ENCODE measurements at regions of chr4 and their contacts with region 1.

Region 1: DNA sequence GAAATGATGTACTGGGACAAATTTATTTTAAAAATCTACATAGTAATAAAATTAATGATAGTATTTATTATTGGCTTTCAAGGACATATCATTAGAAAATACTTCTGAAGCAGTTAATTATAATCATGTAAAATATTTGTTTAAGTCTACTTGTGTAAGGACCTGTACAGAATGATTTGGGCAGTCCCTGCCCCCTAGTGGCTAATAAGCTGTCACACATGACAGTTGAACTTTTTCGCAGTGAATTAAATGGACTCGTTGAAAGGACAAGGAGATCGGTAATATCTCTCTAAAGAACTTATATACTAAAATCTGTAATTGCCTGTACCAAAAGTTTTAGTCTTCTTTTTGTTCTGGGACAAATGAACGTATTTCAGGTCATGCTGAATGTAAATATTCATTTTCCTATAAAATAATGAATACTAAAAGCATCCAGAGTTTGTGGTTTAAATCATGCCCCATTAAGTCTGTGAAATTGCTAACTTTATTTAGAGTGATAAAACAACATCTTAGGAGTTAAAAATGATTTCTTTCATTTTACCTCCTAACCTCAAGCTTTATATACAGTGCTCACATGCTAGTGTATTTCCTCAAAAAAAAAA is 13.6 kb downstream of the EXOC1 start:
- DNase-seq: peak; percentile 78
- H3K4me3 ChIP-seq: no peak overlapping the region
- H3K27ac ChIP-seq: peak overlapping the region; percentile 55
- H3K4me1 ChIP-seq: peaks cover 21% of the 10 kb centered on the region
- H3K27me3 ChIP-seq: no peaks in the 10 kb centered on the region
- CTCF ChIP-seq: peak; percentile 65 to 68
- POLR2A ChIP-seq: no peak

Region 2: DNA sequence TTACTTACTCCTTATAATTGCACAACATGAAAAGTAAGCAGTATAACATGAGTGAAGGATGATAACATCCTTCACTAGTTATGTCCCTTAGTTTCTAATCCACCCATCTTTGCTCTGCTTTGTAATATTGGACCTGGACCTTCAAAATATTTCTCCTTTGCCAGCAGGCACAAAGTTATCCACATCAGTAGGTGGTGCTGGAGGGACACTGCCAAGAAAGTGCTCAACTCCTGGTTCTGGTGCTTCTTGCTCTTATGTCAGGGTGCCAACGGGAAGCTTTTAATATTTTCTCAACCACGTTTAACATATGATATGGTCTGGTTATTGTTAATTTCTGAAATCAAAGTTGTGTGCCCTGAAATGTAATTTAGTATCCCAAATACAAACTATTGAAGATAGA is 422.2 kb before region 1 on chr4:
- CTCF ChIA-PET with region 1: interaction called, 9 read pairs
- POLR2A ChIA-PET with region 1: no interaction called
- dilution Hi-C with region 1: no loop called
- intact Hi-C with region 1: loop called (anchors 2 kb)
- DNase-seq: peak; percentile 31
- H3K4me3 ChIP-seq: no peak overlapping the region
- H3K27ac ChIP-seq: no peak overlapping the region
- H3K4me1 ChIP-seq: peaks cover 3% of the 10 kb centered on the region
- H3K27me3 ChIP-seq: no peaks in the 10 kb centered on the region
- CTCF ChIP-seq: peak in 1 of 2 donors; percentile 20
- POLR2A ChIP-seq: no peak

Region 3: DNA sequence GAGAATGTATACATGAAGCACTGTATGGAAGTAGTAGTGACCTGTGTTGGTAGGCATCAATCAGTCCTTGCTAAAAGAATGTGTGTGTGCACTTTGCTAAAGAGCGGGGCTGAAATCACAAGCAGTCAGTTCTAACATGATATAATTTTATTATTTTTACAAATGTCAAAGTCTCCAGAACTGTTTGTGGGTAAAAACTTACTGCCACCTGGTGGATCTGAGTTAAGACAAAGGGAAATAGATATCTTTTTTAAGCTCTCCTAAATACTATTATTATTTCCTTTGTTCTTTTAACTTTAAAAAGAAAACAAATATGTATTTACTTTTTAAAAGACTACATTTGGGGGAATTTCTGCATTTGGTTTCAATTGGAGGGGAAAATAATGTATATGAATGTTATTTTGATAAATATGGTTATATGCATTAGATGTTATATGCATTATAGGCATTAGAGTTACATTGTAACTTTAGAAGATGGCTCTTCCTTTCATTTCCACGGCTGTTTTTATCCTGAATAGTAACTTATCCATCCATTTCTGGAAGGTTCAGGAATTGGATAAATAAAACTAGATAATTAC is 312.5 kb before region 1 on chr4:
- CTCF ChIA-PET with region 1: interaction called, 16 read pairs
- POLR2A ChIA-PET with region 1: no interaction called
- dilution Hi-C with region 1: no loop called
- intact Hi-C with region 1: no loop called
- DNase-seq: peak; percentile 55
- H3K4me3 ChIP-seq: no peak overlapping the region
- H3K27ac ChIP-seq: no peak overlapping the region
- H3K4me1 ChIP-seq: no peaks in the 10 kb centered on the region
- H3K27me3 ChIP-seq: peaks cover under 1 to 2% of the 10 kb centered on the region in 2 experiments
- CTCF ChIP-seq: peak; percentile 14 to 23
- POLR2A ChIP-seq: no peak

Region 4: GRCh38 chr4:55768291-55768690 is 98.8 kb before region 1 on chr4:
- CTCF ChIA-PET with region 1: no interaction called
- POLR2A ChIA-PET with region 1: no interaction called
- dilution Hi-C with region 1: no loop called
- intact Hi-C with region 1: loop called (anchors 5 kb)
- DNase-seq: peak; percentile 57
- H3K4me3 ChIP-seq: no peak overlapping the region
- H3K27ac ChIP-seq: no peak overlapping the region
- H3K4me1 ChIP-seq: peaks cover 9% of the 10 kb centered on the region
- H3K27me3 ChIP-seq: peaks cover 0 to 2% of the 10 kb centered on the region in 2 experiments
- CTCF ChIP-seq: no peak
- POLR2A ChIP-seq: no peak

Region 5: GRCh38 chr4:55853484-55854046 is 13.5 kb before region 1 on chr4 and contains the start of gene EXOC1:
- CTCF ChIA-PET with region 1: interaction called, 22 read pairs
- POLR2A ChIA-PET with region 1: interaction called, 6 read pairs
- dilution Hi-C with region 1: no loop called
- intact Hi-C with region 1: loop called (anchors 1 kb)
- DNase-seq: peak; percentile 97
- H3K4me3 ChIP-seq: peak within 1 kb of the TSS; percentile 59 to 79 (median 64)
- H3K27ac ChIP-seq: peak within 1 kb of the TSS; percentile 51
- H3K4me1 ChIP-seq: peaks cover 8% of the 10 kb centered on the region
- H3K27me3 ChIP-seq: peaks cover 16 to 22% of the 10 kb centered on the region in 2 experiments
- CTCF ChIP-seq: no peak
- POLR2A ChIP-seq: peak; percentile 83
- total RNA-seq, gene EXOC1: 30.5 and 33.3 TPM in 2 replicates

Region 6: GRCh38 chr4:55904576-55904975 is 37.5 kb after region 1 on chr4:
- CTCF ChIA-PET with region 1: interaction called, 11 read pairs
- POLR2A ChIA-PET with region 1: no interaction called
- dilution Hi-C with region 1: no loop called
- intact Hi-C with region 1: no loop called
- DNase-seq: no peak
- H3K4me3 ChIP-seq: no peak overlapping the region
- H3K27ac ChIP-seq: no peak overlapping the region
- H3K4me1 ChIP-seq: peaks cover 11% of the 10 kb centered on the region
- H3K27me3 ChIP-seq: no peaks in the 10 kb centered on the region
- CTCF ChIP-seq: no peak
- POLR2A ChIP-seq: no peak

Region 7: DNA sequence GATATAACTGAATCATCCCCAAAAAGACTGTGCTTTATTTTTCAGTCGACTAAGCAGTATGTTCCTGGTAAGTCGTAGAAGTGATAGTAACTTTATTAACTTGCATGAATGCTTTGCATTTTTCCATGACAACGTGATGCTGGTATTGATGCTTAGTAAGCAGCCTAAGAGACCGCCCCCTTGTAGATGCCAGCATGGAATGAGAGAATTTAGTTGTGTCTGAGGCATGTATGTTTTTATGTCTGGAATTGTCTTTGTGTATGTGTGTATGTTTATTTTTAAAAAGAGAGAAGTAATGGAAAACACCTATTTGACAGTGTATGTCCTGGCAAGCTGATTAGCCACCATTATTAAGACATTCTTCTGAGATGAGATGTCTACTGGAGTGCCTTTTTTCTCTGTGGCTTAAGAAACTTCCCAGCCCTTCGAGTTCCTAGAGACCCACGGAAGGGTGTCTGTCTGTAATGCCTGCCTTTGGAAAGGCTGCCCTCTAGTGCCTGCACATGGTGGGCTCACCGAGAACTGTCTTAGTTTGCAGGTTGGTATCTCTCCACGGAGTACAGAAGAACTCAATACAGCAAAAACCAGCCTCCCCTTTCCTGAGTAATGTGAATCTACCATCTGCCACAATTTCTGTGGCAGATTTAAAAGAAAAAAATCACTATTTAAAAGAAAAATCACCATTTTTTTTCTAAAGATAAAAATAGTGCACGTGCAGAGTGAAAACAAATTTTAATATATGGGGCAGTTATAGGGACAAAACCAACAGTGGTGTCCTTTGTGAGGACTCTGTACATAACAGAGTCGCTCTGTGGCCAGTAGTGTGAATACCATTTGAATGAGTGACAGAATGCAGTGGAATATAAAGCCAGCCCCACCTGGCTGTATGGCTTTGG is 434.4 kb after region 1 on chr4:
- CTCF ChIA-PET with region 1: no interaction called
- POLR2A ChIA-PET with region 1: no interaction called
- dilution Hi-C with region 1: no loop called
- intact Hi-C with region 1: loop called (anchors 1 kb)
- DNase-seq: peak; percentile 84
- H3K4me3 ChIP-seq: peak overlapping the region in 1 of 3 experiments; percentile 23
- H3K27ac ChIP-seq: peak overlapping the region; percentile 35
- H3K4me1 ChIP-seq: no peaks in the 10 kb centered on the region
- H3K27me3 ChIP-seq: no peaks in the 10 kb centered on the region
- CTCF ChIP-seq: peak; percentile 90
- POLR2A ChIP-seq: no peak

Region 8: GRCh38 chr4:56348576-56348975 is 481.5 kb after region 1 on chr4:
- CTCF ChIA-PET with region 1: no interaction called
- POLR2A ChIA-PET with region 1: no interaction called
- dilution Hi-C with region 1: no loop called
- intact Hi-C with region 1: no loop called
- DNase-seq: no peak
- H3K4me3 ChIP-seq: no peak overlapping the region
- H3K27ac ChIP-seq: no peak overlapping the region
- H3K4me1 ChIP-seq: no peaks in the 10 kb centered on the region
- H3K27me3 ChIP-seq: no peaks in the 10 kb centered on the region
- CTCF ChIP-seq: no peak
- POLR2A ChIP-seq: no peak